Upper lobe of right lung (tissue), 1 donor: ENCODE measurements at regions of chr20 and their contacts with region 1.

Region 1: DNA sequence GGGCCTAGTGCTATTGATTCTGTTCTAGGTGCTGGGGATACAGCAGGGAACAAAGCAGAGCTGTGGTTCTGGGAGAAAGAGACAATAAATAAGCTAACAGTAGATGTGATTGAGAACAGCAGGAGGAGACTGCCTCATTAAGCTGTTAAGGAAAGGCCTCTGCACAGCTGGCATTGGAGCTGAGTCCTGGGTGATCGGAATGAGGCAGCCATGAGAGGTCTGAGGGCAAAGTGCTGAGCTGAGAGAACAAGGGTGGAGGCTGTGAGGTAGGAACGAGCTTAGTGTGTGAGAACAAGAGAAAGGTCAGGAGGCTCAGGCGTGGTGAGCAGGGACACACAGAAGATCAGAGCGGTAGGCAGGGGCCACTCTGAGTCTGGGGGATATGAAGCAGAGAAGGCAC is 18.3 kb downstream of the DDX27 start:
- DNase-seq: no peak
- ATAC-seq: no peak
- H3K4me3 ChIP-seq: no peak overlapping the region
- H3K27ac ChIP-seq: no peak overlapping the region
- H3K4me1 ChIP-seq: no peaks in the 10 kb centered on the region
- H3K27me3 ChIP-seq: no peaks in the 10 kb centered on the region
- CTCF ChIP-seq: no peak

Region 2: DNA sequence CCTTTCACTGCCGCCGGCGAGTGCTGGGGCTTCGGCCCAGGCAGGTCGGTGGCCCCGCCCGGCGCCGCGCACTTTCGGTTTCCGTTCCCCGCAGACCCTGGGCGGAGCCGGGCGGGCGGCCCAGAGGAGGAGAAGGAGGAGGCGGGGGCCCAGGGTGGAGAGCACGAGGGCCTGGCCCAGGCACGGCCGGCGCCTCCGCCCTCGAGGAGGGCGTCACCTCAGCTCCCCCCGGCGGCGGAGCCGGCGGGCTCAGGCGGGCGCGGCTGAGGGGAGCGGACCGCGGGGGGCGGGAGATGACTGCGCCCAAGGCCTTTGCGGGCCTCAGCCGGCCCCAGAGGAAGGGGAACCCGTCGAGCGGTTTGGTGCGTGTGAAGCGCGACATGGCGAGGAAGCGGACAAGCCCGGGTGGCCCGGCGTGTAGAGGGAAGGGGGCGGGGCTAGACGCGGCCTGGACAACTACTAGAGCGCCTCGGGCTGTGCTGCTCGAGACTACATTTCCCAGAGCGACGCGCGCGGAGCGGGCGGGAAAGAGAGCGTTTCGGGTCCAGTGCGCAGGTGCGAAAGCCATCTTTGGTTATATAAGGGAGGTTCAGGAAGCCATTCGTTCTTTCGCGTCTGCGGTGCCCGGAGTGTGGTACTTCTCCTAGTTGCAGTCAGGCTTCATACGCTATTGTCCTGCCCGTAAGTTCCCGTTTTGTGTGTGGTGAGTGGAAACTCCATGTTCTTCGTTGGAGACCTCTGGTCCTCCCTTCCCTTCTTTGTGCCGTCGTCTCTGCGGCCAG is 40.7 kb after region 1 on chr20 and contains the start of gene ZNFX1:
- intact Hi-C with region 1: no loop called
- DNase-seq: peak; percentile 100
- ATAC-seq: peak; percentile 96
- H3K4me3 ChIP-seq: peak within 1 kb of the TSS; percentile 89
- H3K27ac ChIP-seq: peak within 1 kb of the TSS; percentile 95
- H3K4me1 ChIP-seq: peaks cover 66% of the 10 kb centered on the region
- H3K27me3 ChIP-seq: no peaks in the 10 kb centered on the region
- CTCF ChIP-seq: no peak
- total RNA-seq, gene ZNFX1: 54.4 TPM

Region 3: GRCh38 chr20:49326026-49326425 is 88.5 kb after region 1 on chr20:
- intact Hi-C with region 1: loop called (anchors 5 kb)
- DNase-seq: no peak
- ATAC-seq: no peak
- H3K4me3 ChIP-seq: no peak overlapping the region
- H3K27ac ChIP-seq: no peak overlapping the region
- H3K4me1 ChIP-seq: no peaks in the 10 kb centered on the region
- H3K27me3 ChIP-seq: peaks cover 11% of the 10 kb centered on the region
- CTCF ChIP-seq: no peak